ENCODE measurements at regions of chr20 and their contacts with region 1.

Region 1: DNA sequence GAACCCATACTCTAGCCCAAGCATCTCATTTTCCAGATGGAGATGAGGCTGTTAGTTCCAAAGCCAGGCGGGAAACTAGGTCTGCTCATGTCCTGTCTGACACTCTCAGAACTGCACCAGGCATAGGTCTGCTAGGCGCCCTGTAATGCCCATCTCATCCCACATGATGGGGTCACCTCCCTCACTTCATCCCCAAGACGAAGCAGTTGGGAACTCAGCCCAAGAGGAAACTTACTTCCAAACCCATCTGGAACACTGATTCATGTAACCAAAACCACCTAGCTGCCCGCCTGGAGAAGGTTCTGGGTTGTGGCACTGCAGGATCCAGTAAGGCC is 119.4 kb upstream of the PRND start:
- DNase-seq: peak; percentile 36
- ATAC-seq: peak; percentile 12
- H3K4me3 ChIP-seq: no peak overlapping the region
- H3K27ac ChIP-seq: no peak overlapping the region
- H3K4me1 ChIP-seq: peaks cover 41% of the 10 kb centered on the region
- H3K27me3 ChIP-seq: no peaks in the 10 kb centered on the region
- CTCF ChIP-seq: no peak

Region 2: DNA sequence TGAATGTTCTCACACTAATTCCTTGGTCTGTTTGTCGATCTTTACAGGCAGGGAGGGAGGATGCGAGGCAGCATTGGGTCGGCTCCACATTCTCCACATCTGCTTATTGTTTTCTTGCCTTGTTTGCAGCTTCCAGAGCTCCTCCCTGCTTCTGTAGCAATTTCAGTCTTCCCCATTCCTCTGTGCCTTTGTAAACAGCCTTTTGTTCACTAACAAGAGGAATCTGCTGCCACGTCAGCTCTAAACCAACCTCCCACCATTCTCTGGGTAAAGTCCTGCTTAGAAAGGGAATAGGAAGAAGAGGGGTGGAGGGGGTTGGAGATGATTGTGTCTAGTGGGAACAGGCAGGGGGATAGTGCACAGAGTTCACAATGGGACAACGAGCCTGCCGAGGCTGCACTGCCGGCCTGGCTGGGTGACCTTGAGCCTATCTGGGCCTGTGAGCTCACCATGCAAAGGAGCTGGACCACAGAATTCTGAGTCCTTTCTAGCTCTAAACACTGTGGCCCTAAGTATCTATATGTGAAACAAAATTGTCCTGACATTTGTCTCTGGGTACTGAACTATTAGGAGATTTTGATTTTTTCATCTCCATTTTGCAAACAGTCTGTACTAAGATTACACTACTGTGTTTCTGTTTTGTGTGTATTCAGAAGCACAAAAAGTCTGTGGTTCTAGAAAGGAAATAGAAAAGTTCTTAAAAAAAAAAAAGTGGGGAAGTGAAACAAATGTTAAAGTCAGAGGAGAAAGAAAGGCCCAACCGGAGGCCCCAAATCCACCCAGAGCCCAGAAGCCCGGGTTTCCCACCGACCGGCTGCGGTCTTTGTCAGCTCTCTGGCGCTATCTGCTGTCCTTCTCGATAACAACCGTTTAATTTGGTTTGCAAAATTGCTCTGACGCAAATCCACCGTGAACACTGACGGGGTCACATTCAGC is 118.0 kb after region 1 on chr20:
- CTCF ChIA-PET with region 1: interaction called, 12 read pairs
- POLR2A ChIA-PET with region 1: no interaction called
- intact Hi-C with region 1: loop called (anchors 1 kb)
- DNase-seq: peak; percentile 85
- ATAC-seq: peak; percentile 78
- H3K4me3 ChIP-seq: peak overlapping the region; percentile 46; the same call in 1 of the 2 replicates
- H3K27ac ChIP-seq: no peak overlapping the region
- H3K4me1 ChIP-seq: no peaks in the 10 kb centered on the region
- H3K27me3 ChIP-seq: no peaks in the 10 kb centered on the region
- CTCF ChIP-seq: peak; percentile 95